Activated CD4-positive, alpha-beta memory T cell treated with anti-CD3 and anti-CD28 coated beads for 36 hours (primary cell): ENCODE measurements at regions of chr20 and their contacts with region 1.

Region 1: DNA sequence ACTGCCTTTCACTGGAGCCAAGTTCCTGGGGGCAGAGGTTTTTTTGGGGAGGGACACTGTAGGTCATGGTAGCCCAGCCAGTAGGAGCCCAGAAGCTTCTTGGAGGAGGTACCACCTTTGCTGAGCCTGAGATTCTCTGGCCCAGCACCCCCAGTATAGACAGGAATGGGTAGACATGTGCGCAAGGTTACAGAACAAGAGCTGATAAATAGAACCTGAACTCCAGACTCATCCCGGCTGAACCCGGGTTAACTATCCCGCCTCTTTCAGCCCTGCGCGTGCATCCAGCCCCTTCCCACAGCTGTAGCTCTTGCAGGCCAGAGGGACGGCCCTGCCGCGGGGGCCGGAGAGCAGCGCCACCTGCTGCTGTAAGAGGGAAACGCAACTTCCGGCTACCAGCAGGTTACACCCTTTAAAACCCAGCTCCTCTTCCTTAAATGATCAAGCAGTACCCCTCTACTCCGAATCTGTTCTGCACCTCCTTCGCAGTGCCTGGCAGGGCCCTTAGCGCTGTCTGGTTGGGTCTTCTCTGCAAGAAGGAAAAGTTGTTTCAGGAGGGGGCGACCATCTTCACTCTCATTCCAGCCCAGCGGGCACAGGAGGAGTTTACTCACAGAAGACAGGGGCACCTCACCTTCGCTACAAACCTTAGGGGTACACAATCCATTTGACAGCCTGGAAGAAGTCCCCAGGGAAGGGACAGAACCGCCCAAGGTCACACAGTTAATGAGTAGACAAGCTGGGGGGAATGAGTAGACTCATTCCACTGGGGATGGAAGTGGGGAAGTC is 7.5 kb downstream of the SRXN1 start:
- DNase-seq: peak; percentile 83
- H3K4me3 Mint-ChIP-seq: no peak overlapping the region
- H3K27ac Mint-ChIP-seq: no peak overlapping the region
- H3K4me1 Mint-ChIP-seq: peaks cover 16% of the 10 kb centered on the region
- H3K27me3 Mint-ChIP-seq: peaks cover 13% of the 10 kb centered on the region

Region 2: GRCh38 chr20:543369-544152 is 102.0 kb before region 1 on chr20 and contains the start of gene CSNK2A1:
- CTCF ChIA-PET with region 1: interaction called, 16 read pairs
- POLR2A ChIA-PET with region 1: interaction called, 4 read pairs
- intact Hi-C with region 1: loop called (anchors 5 kb)
- DNase-seq: peak; percentile 97
- H3K4me3 Mint-ChIP-seq: peak within 1 kb of the TSS; percentile 85
- H3K27ac Mint-ChIP-seq: peak within 1 kb of the TSS; percentile 96
- H3K4me1 Mint-ChIP-seq: peaks cover 48% of the 10 kb centered on the region
- H3K27me3 Mint-ChIP-seq: peaks cover 4% of the 10 kb centered on the region
- total RNA-seq, gene CSNK2A1: 154 to 155 TPM

Region 3: DNA sequence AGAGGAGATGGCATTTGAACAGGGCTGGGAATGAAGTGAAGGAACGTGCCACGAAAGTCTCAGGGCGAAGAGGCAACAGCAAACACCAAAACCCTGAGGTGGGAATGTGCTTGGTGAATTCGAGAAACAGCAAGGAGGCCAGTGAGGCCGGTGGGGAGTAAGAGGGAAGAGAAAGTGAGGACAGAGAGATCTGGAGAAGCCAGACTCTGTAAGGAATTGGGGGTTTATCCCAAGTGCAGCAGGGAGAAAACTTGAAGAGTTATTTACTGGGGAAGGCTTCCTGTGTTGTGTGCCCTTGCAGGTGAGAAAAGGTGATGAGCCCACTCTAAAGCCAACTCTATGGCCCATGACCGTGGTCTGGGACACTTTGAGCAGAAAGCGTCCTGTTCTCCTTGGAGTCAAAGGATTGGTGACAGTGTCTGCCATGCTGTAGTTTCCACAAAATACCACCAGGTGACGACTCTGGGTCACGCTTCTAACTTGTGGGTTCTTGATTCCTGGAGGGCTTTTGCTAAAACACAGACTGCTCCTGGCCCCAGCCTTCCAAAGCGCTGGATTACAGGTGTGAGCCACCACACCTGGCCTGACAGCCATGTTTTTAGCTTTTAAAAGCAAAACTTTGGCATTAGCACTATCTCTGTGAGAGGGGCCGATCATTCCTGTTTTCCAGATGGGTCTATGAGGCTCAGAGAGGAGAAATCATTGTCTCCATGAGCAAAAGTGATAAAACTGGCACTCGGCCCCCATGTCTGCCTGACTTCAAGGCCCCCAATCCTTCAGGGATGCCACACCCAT is 83.9 kb before region 1 on chr20:
- CTCF ChIA-PET with region 1: interaction called, 99 read pairs
- POLR2A ChIA-PET with region 1: no interaction called
- intact Hi-C with region 1: loop called (anchors 1 kb)
- DNase-seq: peak; percentile 74
- H3K4me3 Mint-ChIP-seq: no peak overlapping the region
- H3K27ac Mint-ChIP-seq: no peak overlapping the region
- H3K4me1 Mint-ChIP-seq: no peaks in the 10 kb centered on the region
- H3K27me3 Mint-ChIP-seq: peaks cover 13% of the 10 kb centered on the region

Region 4: DNA sequence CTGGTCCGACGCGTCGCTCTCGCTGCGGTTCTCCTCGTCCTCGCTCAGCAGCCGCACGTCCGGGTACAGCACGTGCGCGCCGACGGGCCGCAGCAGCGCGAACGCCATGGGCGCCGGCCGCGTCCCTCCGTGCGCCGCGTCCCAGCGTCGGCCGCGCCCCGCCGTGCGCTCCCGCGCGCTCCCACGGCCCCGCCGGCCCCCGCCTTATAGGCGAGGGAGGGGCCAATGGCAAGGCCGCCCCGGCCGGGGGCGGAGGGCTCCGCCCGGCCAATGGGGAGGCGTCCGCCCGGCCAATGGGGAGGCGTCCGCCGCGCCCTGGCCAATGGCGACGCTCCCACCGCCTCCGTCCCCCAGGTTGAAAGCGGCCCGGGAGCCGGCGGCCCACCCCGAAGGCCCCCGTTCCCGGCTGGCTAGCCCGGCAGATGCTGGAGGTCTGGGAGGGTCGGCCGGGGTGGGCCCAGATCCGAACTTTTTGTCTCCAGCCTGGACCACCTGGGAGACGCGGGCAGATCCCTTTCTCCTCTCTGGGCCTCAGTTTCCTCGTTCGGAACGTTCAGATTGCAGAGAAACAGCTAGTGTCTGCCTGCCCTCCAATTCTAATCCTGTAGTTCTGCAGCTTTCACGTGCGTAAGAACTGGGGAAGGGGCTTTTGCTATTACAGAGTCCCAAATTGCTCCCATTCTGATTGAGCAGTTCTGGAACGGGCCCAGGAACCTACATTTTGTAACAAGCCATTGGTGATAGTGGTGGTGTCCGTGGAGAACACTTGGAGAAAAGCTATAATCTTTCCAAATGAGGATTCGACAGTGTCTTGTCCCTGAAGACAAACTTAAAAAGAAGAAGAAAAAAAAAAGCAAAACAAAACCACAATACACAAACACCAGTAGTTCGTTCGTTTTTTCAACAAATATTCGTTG is 35.1 kb before region 1 on chr20 and contains the start of gene TCF15:
- CTCF ChIA-PET with region 1: interaction called, 13 read pairs
- POLR2A ChIA-PET with region 1: no interaction called
- intact Hi-C with region 1: loop called (anchors 5 kb)
- DNase-seq: peak; percentile 20
- H3K4me3 Mint-ChIP-seq: no peak within 1 kb of the TSS
- H3K27ac Mint-ChIP-seq: no peak within 1 kb of the TSS
- H3K4me1 Mint-ChIP-seq: peaks cover 12% of the 10 kb centered on the region
- H3K27me3 Mint-ChIP-seq: peaks cover 51% of the 10 kb centered on the region
- total RNA-seq, gene TCF15: not detected

Region 5: GRCh38 chr20:658731-659291 is 13.3 kb after region 1 on chr20:
- CTCF ChIA-PET with region 1: interaction called, 10 read pairs
- POLR2A ChIA-PET with region 1: no interaction called
- intact Hi-C with region 1: no loop called
- DNase-seq: no peak
- H3K4me3 Mint-ChIP-seq: no peak overlapping the region
- H3K27ac Mint-ChIP-seq: no peak overlapping the region
- H3K4me1 Mint-ChIP-seq: peaks cover 9% of the 10 kb centered on the region
- H3K27me3 Mint-ChIP-seq: peaks cover 32% of the 10 kb centered on the region

Region 6: GRCh38 chr20:739736-740135 is 94.2 kb after region 1 on chr20:
- CTCF ChIA-PET with region 1: interaction called, 11 read pairs
- POLR2A ChIA-PET with region 1: no interaction called
- intact Hi-C with region 1: no loop called
- DNase-seq: no peak
- H3K4me3 Mint-ChIP-seq: no peak overlapping the region
- H3K27ac Mint-ChIP-seq: no peak overlapping the region
- H3K4me1 Mint-ChIP-seq: no peaks in the 10 kb centered on the region
- H3K27me3 Mint-ChIP-seq: peaks cover 22% of the 10 kb centered on the region

Region 7: GRCh38 chr20:856361-857040 is 211.0 kb after region 1 on chr20:
- CTCF ChIA-PET with region 1: no interaction called
- POLR2A ChIA-PET with region 1: no interaction called
- intact Hi-C with region 1: no loop called
- DNase-seq: peak; percentile 75
- H3K4me3 Mint-ChIP-seq: peak overlapping the region; percentile 12
- H3K27ac Mint-ChIP-seq: no peak overlapping the region
- H3K4me1 Mint-ChIP-seq: peaks cover 57% of the 10 kb centered on the region
- H3K27me3 Mint-ChIP-seq: no peaks in the 10 kb centered on the region